Left cardiac atrium (tissue), 4 donors: ENCODE measurements at regions of chr17 and their contacts with region 1.

Region 1: GRCh38 chr17:55295411-55296170 is 30.8 kb downstream of the HLF start:
- DNase-seq: peak; percentile 48
- ATAC-seq: peak; percentile 86 to 90

Region 2: DNA sequence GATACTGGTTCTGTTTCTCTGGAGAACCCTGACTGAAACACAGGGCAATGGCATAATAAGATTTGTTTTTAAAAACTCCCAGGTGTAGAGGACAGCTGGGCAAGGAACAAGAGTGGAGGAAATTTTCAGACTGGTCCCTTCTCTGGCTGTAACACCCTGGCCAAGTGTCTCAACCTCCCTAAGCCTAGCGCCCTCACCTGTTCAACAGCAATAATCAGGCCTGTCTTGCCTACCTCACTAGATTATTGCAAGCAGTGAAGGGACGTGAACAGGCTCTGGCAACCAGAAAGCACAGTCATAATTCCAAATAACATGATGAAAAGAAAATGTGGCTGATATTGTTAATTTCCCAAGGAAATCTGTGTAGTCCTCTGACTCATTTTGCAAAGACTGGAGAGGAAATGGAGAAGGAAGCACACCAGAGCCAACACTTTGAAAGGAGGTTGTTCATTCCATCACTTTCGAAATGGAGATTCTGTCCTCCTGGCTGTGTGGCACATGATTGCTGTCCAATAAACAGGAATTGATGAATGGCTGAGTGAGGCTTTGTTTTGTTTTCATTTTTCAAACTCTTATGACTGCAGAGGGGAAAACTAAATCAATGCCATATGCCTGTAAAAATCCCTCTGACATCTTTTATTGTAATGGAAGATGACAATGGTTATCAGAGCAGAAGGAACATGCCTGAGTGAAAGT is 118.3 kb before region 1 on chr17:
- intact Hi-C with region 1: no loop called
- DNase-seq: no peak
- ATAC-seq: no peak

Region 3: DNA sequence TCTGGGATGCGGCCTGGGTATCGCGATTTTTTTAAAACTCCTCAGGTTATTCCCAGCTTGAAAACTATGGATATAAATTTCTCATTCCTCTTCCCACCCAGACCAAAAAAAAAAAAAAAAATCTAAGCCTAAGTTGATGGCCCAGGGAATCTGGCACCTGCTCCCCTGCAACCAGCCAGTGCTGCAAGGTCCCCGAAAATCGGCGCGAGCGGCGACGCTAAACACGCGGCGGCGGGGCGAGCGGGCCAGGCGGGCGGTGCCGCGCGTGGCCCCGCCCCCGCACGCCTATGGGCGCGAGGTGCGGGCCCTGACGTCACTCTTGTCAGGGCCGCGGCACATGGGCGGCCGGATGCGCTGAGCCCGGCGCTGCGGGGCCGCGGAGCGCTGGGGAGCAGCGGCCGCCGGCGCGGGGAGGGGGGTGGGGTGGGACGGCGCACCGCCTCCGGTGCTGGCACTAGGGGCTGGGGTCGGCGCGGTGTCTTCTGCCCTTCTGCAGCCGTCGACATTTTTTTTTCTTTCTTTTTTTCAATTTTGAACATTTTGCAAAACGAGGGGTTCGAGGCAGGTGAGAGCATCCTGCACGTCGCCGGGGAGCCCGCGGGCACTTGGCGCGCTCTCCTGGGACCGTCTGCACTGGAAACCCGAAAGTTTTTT is 30.8 kb before region 1 on chr17 and contains the start of gene HLF:
- intact Hi-C with region 1: loop called in 1 of 2 experiments (anchors 2 kb)
- DNase-seq: peak; percentile 86
- ATAC-seq: peak; percentile 96 to 97
- total RNA-seq, gene HLF: 36.7 to 36.8 TPM